ENCODE measurements at regions of chr11 and their contacts with region 1.

Region 1: GRCh38 chr11:93685196-93685595 is 23.7 kb downstream of the CEP295 start:
- DNase-seq: no peak
- ATAC-seq: no peak
- H3K4me3 ChIP-seq: no peak overlapping the region
- H3K4me3 Mint-ChIP-seq: no peak overlapping the region
- H3K27ac ChIP-seq: no peak overlapping the region
- H3K27ac Mint-ChIP-seq: no peak overlapping the region
- H3K4me1 ChIP-seq: no peaks in the 10 kb centered on the region
- H3K4me1 Mint-ChIP-seq: peaks cover 0 to 14% (median 0%) of the 10 kb centered on the region in 7 donors
- H3K27me3 ChIP-seq: no peaks in the 10 kb centered on the region
- H3K27me3 Mint-ChIP-seq: no peaks in the 10 kb centered on the region

Region 2: DNA sequence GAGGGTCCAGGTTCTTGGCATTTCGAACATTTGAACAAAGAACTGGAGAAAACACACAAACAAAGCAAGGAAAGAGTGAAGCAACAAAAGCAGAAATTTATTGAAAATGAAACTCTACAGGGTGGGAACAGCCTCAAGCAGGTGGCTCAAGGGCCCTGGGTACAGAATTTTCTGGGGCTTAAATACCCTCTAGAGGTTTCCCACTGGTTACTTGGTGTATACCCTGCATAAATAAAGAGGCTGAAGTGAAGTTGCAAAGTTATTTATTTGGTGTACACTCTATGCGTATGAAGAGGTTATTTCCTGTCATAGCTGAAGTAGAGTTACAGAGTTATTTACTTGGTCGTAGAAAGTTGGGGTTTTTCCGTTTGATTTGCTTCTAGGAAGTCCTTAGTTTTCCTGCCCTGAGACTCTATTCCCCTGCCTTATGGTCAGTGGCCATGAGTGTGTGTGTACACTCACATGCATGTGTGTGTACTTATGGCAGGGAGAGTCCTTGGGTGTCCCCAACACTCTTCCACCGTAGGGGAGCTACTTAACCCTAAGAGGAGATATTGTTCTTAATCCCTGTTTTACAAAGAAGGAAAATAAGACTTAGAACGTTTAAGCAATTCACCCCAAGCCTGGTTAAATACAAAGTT is 136.4 kb before region 1 on chr11:
- CTCF ChIA-PET with region 1: no interaction called
- POLR2A ChIA-PET with region 1: no interaction called
- intact Hi-C with region 1: no loop called
- DNase-seq: no peak
- ATAC-seq: no peak
- H3K4me3 ChIP-seq: no peak overlapping the region
- H3K4me3 Mint-ChIP-seq: no peak overlapping the region
- H3K27ac ChIP-seq: no peak overlapping the region
- H3K27ac Mint-ChIP-seq: peak overlapping the region in 1 of 9 donors; percentile 27
- H3K4me1 ChIP-seq: no peaks in the 10 kb centered on the region
- H3K4me1 Mint-ChIP-seq: peaks cover 5 to 12% (median 9%) of the 10 kb centered on the region in 7 donors
- H3K27me3 ChIP-seq: no peaks in the 10 kb centered on the region
- H3K27me3 Mint-ChIP-seq: peaks cover 4 to 33% (median 16%) of the 10 kb centered on the region in 5 donors

Region 3: DNA sequence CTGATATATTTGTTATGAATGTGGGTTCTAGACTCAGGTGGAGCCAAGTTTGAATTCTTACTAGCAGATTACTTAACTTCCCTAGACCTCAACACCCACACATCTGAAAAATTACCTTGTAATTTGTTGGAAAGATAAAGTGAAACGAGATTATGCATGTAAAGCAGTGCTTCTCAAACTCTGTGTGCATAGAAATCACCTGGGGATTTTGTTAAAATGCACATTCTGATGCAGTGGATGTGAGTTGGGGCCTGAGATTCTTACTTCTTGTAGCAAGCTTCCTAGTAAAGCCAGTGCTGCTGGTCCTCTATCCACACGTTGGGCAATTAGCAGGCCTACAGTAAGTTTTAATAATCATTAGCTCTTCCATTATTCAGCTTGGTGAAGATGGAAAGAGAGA is 38.8 kb before region 1 on chr11:
- CTCF ChIA-PET with region 1: no interaction called
- POLR2A ChIA-PET with region 1: no interaction called
- intact Hi-C with region 1: no loop called
- DNase-seq: no peak
- ATAC-seq: no peak
- H3K4me3 ChIP-seq: no peak overlapping the region
- H3K4me3 Mint-ChIP-seq: peak overlapping the region in 5 of 10 donors; percentile 18 to 88 (median 49)
- H3K27ac ChIP-seq: no peak overlapping the region
- H3K27ac Mint-ChIP-seq: peak overlapping the region in 7 of 9 donors; percentile 46 to 91 (median 81)
- H3K4me1 ChIP-seq: peaks cover 0 to 3% of the 10 kb centered on the region in 2 donors
- H3K4me1 Mint-ChIP-seq: peaks cover 3 to 22% (median 15%) of the 10 kb centered on the region in 7 donors
- H3K27me3 ChIP-seq: no peaks in the 10 kb centered on the region
- H3K27me3 Mint-ChIP-seq: peaks cover 0 to 18% (median 4%) of the 10 kb centered on the region in 5 donors

Region 4: DNA sequence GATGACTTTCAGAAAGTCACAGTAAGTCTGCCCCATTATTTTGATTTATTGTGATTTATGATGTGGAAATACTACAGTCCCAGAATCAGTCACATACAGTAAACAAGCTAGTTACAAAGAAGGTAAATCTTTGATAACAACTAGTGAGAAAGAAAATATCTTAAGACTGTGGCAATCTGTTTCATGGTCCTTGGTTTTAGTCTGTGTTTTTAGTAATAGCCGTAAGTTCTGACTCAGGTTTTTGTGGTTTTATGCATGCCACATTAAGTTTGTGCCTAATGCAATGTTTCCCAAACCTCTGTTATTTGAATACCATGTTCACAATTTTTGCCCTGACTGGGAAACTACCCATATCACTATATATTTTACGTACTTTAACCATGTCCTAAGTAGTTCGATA is 17.0 kb before region 1 on chr11:
- CTCF ChIA-PET with region 1: interaction called, 4 read pairs
- POLR2A ChIA-PET with region 1: no interaction called
- intact Hi-C with region 1: loop called in 1 of 2 experiments (anchors 2 kb)
- DNase-seq: no peak
- ATAC-seq: no peak
- H3K4me3 ChIP-seq: no peak overlapping the region
- H3K4me3 Mint-ChIP-seq: no peak overlapping the region
- H3K27ac ChIP-seq: no peak overlapping the region
- H3K27ac Mint-ChIP-seq: peak overlapping the region in 2 of 9 donors; percentile 18 to 25
- H3K4me1 ChIP-seq: no peaks in the 10 kb centered on the region
- H3K4me1 Mint-ChIP-seq: peaks cover 5 to 34% (median 17%) of the 10 kb centered on the region in 7 donors
- H3K27me3 ChIP-seq: no peaks in the 10 kb centered on the region
- H3K27me3 Mint-ChIP-seq: no peaks in the 10 kb centered on the region